Posterior vena cava (tissue), 2 donors: ENCODE measurements at regions of chr4 and their contacts with region 1.

Region 1: DNA sequence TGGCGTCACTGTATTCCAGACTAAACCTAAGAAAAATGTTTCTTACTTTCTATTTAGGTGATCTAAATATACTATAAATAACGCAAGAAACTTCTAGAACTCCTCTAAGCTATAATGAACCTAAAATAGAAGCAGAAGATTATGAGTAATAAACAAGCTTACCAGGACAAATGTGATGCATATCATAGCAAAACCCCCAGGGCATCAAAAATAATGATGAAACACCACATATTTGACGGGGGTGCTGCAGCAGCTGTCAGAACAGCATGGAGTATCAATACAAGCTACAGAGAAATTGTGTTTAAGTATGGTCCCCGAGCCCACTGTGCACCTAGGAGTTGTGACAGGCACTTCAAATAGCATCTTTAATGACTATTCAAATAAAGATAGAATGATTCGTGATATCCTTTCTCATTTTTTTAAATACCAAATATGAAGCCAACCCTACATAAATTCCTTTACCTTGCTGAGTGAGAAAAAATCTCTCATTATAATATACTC is 337.3 kb downstream of the CENPC start:
- DNase-seq: no peak

Region 2: GRCh38 chr4:67220861-67221260 is 12.9 kb after region 1 on chr4:
- intact Hi-C with region 1: loop called in 1 of 2 experiments (anchors 1 kb)
- DNase-seq: no peak

Region 3: DNA sequence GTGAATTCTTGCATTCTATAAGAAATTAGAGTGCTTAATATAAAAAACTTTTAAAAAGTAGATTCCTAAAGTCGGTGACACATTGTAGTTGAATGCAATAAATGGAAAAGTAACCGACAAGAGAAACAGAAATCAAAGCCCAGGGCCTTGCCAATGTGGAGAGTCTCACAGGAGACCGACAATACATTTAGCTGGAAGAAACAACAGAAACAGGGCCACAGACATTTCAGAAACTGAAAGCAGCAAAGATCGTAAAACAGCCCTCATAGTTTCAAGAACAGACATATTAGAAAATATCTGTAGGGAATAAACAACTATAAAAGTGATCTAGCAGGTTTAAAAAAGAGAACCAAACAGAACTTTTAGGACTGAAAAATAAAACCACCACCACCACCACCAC is 400.0 kb after region 1 on chr4:
- intact Hi-C with region 1: no loop called
- DNase-seq: no peak